MCF 10A (cell line): ENCODE measurements at regions of chr1 and their contacts with region 1.

Region 1: DNA sequence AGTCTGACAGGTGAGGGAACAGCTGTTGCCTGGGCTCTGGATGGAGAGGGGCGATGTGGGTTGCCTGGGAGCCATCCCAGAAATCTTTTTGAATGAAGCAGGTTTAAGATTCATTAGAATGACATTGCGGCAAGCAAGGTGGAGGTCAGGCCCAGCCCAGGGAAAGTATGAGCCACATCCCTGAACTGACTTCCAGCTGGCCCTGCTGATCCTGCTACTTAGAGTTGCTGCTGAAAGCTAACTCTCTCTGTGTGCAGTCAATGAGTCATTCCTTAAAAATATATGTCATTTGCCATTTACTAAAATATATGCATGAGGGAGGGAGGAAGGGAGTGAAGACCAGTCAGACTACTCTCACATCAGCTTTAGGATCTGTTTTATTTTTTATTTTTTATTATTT is 54.3 kb upstream of the RAB3GAP2 start:
- DNase-seq: peak; percentile 57
- H3K4me3 Mint-ChIP-seq: no peak overlapping the region
- H3K27ac Mint-ChIP-seq: peak overlapping the region; percentile 11
- H3K4me1 Mint-ChIP-seq: peaks cover 8% of the 10 kb centered on the region
- H3K27me3 Mint-ChIP-seq: no peaks in the 10 kb centered on the region
- CTCF ChIP-seq: no peak

Region 2: GRCh38 chr1:220315070-220315839 is 11.3 kb before region 1 on chr1:
- CTCF ChIA-PET with region 1: interaction called, 4 read pairs
- POLR2A ChIA-PET with region 1: interaction called, 13 read pairs
- intact Hi-C with region 1: no loop called
- DNase-seq: peak; percentile 62
- H3K4me3 Mint-ChIP-seq: no peak overlapping the region
- H3K27ac Mint-ChIP-seq: no peak overlapping the region
- H3K4me1 Mint-ChIP-seq: peaks cover 5% of the 10 kb centered on the region
- H3K27me3 Mint-ChIP-seq: no peaks in the 10 kb centered on the region
- CTCF ChIP-seq: no peak